ENCODE measurements at regions of chr5 and their contacts with region 1.

Region 1: DNA sequence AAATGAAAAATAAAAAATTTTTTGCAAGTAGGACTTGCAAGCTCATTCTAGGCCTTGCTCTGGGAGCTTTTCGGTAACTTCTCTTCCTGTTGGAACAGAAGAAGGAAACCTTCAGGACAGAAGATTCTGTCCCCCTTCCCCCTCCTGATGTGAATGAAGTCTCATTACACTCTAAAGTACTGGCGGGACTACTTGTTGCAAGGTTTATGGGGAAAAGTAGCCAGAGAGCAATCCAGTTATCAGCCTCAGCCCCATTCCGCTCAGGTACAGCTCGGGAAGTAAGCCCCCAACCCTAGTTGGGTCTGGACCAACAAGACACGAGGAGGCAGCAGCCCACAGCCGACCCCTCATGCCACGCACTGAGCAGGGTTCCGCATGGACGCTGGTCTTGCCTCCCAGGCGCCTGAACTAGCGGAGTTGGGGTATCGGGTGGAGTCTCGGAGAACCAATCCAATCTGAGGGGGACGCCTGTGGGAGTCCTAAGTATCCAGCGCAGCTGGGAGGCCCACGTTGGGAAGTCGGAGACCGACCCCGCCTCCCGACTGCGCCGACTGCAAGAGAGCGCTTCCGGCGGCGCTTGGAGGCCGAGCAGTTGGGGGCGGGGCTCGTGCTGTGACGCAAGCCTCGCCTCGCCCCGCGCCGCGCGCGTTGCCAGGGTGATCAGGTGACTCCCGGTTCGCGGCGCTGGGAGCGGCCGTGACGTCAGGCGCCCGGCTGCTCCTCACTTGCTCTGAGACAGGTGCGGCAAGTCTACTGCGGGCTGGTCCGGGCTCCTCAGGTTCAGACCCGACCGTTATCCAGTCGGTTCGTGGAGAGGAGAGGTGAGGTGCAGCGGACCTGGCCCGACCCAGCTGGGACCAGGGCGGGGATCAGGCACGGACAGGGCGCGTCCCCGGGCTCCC is at the start of gene CYSTM1:
- DNase-seq: peak; percentile 96 to 99
- ATAC-seq: peak; percentile 88 to 97 (median 89)
- H3K4me3 ChIP-seq: peak within 1 kb of the TSS; percentile 67
- H3K4me3 Mint-ChIP-seq: peak within 1 kb of the TSS; percentile 95
- H3K27ac ChIP-seq: peak within 1 kb of the TSS; percentile 71
- H3K27ac Mint-ChIP-seq: peak within 1 kb of the TSS; percentile 89 to 97
- H3K4me1 ChIP-seq: peaks cover 13% of the 10 kb centered on the region
- H3K4me1 Mint-ChIP-seq: peaks cover 21% of the 10 kb centered on the region in 2 donors
- H3K27me3 ChIP-seq: peaks cover 4% of the 10 kb centered on the region
- H3K27me3 Mint-ChIP-seq: peaks cover 11% of the 10 kb centered on the region in 2 donors
- CTCF ChIP-seq: no peak
- total RNA-seq, gene CYSTM1: 3.9 to 4.9 (median 4.2) TPM

Region 2: GRCh38 chr5:140113699-140114263 is 60.9 kb before region 1 on chr5 and contains the start of gene PURA:
- intact Hi-C with region 1: loop called (anchors 2 kb)
- DNase-seq: peak; percentile 95 to 98
- ATAC-seq: peak; percentile 88 to 93 (median 88)
- H3K4me3 ChIP-seq: peak within 1 kb of the TSS; percentile 74
- H3K4me3 Mint-ChIP-seq: peak within 1 kb of the TSS; percentile 93
- H3K27ac ChIP-seq: peak within 1 kb of the TSS; percentile 95
- H3K27ac Mint-ChIP-seq: peak within 1 kb of the TSS; percentile 93 to 96
- H3K4me1 ChIP-seq: peaks cover 26% of the 10 kb centered on the region
- H3K4me1 Mint-ChIP-seq: peaks cover 47 to 60% of the 10 kb centered on the region in 2 donors
- H3K27me3 ChIP-seq: peaks cover 24% of the 10 kb centered on the region
- H3K27me3 Mint-ChIP-seq: peaks cover 17 to 24% of the 10 kb centered on the region in 2 donors
- CTCF ChIP-seq: no peak
- total RNA-seq, gene PURA: 8.1 to 12.0 (median 9.8) TPM